ENCODE measurements at regions of chrX and their contacts with region 1.

Region 1: DNA sequence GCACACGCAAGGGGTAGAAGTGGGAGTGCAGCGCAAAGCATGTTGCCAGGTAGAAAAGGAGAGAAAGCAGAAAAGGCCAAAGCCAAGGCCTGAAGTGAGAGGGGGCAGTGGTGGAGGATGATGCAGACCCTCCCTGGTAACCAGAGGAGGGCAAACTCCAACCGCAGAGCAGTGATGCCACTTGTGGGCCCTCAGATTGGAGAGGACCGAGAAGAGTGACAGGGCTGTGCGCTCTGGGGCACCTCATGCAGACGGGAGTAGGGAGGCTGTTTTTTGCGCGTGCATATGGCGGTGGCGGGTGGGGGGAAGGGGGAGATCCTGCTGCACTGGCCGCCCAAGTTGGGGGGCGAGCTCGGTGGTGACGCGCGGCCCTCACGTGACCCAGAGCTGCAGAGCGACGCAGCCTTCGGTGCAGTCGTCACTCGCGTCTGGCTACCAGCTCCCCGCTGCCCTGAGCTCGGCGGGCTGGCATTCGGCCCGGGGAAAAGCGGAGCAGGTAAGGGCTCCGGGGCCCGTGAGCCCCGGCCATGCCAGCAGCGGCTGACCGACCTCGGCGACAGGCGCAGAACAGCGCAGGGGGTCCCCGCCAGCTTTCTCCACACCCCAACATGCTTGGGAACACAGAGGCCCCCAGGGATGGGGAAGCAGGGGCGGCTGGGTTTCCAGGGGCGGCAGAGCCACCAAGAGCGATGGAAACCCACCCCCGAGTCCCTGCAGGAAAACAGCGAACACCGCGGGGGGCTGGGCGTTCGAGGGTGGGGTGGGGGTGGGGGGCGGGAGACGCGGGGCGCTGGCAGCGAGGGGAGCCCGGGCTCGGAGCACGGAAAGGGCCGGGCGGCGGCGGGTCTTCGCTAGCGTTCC is at the start of gene BEX3:
- DNase-seq: peak; percentile 38
- H3K4me3 Mint-ChIP-seq: peak within 1 kb of the TSS; percentile 76
- H3K27ac Mint-ChIP-seq: peak within 1 kb of the TSS; percentile 56
- H3K4me1 Mint-ChIP-seq: peaks cover 5% of the 10 kb centered on the region
- H3K27me3 Mint-ChIP-seq: no peaks in the 10 kb centered on the region
- total RNA-seq, gene BEX3: 40.4 to 46.5 TPM

Region 2: GRCh38 chrX:103248553-103248952 is 127.8 kb before region 1 on chrX:
- CTCF ChIA-PET with region 1: no interaction called
- intact Hi-C with region 1: no loop called
- DNase-seq: no peak
- H3K4me3 Mint-ChIP-seq: no peak overlapping the region
- H3K27ac Mint-ChIP-seq: no peak overlapping the region
- H3K4me1 Mint-ChIP-seq: peaks cover 3% of the 10 kb centered on the region
- H3K27me3 Mint-ChIP-seq: no peaks in the 10 kb centered on the region

Region 3: DNA sequence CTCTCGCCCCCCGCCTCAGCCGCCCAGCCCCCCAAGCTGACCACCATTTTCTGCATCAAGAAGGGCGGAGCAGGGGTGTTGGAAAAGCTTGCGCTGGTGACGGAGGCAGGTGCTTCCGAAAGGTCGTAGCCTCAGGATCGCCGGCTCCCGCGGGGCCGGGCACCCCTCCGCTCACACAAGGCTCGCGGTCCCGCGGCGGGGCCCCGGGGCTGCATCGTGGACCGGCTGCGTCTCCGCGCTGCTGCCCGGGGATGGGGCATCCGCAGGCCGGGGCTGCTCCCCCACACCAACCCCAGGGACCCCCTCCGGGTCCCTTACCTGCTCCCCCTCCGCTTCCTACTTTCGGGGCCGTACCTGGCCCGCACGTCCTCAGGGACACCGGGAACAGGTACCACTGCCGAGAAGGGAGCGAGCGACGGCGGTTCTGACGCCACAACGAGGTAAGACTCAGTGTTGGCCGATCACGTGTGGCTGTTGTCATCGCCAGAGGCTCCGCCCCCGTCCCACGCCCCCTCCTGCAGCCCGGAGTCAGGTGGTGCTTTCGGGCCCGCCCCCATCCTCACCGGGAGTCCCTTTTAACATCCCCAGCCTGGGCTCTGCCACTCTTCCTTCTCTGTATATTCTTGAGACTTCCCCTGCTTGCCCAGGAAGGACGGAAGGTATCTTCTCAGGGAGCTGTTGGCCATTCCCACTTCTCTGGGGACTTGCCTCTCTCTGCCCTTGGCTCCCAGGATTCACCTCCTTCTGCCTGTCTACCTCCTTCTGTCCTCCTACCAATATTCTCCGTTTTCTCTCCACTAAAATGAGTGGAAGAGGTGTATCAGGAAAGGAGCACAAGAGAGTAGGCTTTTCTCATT is 65.6 kb before region 1 on chrX and contains the start of gene BEX2:
- CTCF ChIA-PET with region 1: no interaction called
- intact Hi-C with region 1: loop called (anchors 2 kb)
- DNase-seq: peak; percentile 91
- H3K4me3 Mint-ChIP-seq: peak within 1 kb of the TSS; percentile 70
- H3K27ac Mint-ChIP-seq: peak within 1 kb of the TSS; percentile 53
- H3K4me1 Mint-ChIP-seq: peaks cover 9% of the 10 kb centered on the region
- H3K27me3 Mint-ChIP-seq: no peaks in the 10 kb centered on the region
- total RNA-seq, gene BEX2: 16.0 to 18.9 TPM

Region 4: GRCh38 chrX:103404231-103405208 is 28.2 kb after region 1 on chrX:
- CTCF ChIA-PET with region 1: no interaction called
- intact Hi-C with region 1: loop called (anchors 2 kb)
- DNase-seq: peak; percentile 69
- H3K4me3 Mint-ChIP-seq: peak overlapping the region; percentile 78
- H3K27ac Mint-ChIP-seq: no peak overlapping the region
- H3K4me1 Mint-ChIP-seq: peaks cover 3% of the 10 kb centered on the region
- H3K27me3 Mint-ChIP-seq: no peaks in the 10 kb centered on the region

Region 5: DNA sequence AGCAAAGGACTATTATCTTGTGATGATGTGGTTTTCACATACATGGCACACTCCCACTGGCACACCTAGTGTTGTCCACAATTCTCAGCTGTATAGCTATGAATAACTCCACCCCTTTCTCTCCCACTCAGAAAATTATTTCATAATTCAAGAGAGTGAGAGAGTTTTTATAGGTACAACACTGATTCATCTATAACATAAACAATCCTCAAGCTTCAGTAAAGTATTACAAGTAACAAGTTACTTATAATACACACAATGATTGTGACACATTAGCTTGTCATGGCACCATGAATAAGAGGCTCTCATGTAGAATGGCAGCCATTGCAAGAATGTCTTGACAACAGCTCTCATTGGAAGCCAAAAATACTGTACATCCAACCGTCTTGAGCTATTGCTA is 99.0 kb after region 1 on chrX:
- CTCF ChIA-PET with region 1: no interaction called
- intact Hi-C with region 1: no loop called
- DNase-seq: no peak
- H3K4me3 Mint-ChIP-seq: no peak overlapping the region
- H3K27ac Mint-ChIP-seq: no peak overlapping the region
- H3K4me1 Mint-ChIP-seq: no peaks in the 10 kb centered on the region
- H3K27me3 Mint-ChIP-seq: no peaks in the 10 kb centered on the region

Region 6: GRCh38 chrX:103734125-103734770 is 357.9 kb after region 1 on chrX:
- CTCF ChIA-PET with region 1: no interaction called
- intact Hi-C with region 1: no loop called
- DNase-seq: no peak
- H3K4me3 Mint-ChIP-seq: no peak overlapping the region
- H3K27ac Mint-ChIP-seq: no peak overlapping the region
- H3K4me1 Mint-ChIP-seq: peaks cover 6% of the 10 kb centered on the region
- H3K27me3 Mint-ChIP-seq: peaks cover 3% of the 10 kb centered on the region